GM12878 (cell line): ENCODE measurements at regions of chr2 and their contacts with region 1.

Region 1: GRCh38 chr2:60954139-60954538 is 63.4 kb upstream of the PEX13 start:
- DNase-seq: peak; percentile 40
- ATAC-seq: peak; percentile 94
- H3K4me3 ChIP-seq: no peak overlapping the region
- H3K27ac ChIP-seq: no peak overlapping the region
- H3K4me1 ChIP-seq: no peaks in the 10 kb centered on the region
- H3K27me3 ChIP-seq: no peaks in the 10 kb centered on the region
- CTCF ChIP-seq: no peak
- EP300 ChIP-seq: peak; percentile 45 to 79; a peak in 3 of 4 replicates
- POLR2A ChIP-seq: no peak
- RAD21 ChIP-seq: no peak

Region 2: DNA sequence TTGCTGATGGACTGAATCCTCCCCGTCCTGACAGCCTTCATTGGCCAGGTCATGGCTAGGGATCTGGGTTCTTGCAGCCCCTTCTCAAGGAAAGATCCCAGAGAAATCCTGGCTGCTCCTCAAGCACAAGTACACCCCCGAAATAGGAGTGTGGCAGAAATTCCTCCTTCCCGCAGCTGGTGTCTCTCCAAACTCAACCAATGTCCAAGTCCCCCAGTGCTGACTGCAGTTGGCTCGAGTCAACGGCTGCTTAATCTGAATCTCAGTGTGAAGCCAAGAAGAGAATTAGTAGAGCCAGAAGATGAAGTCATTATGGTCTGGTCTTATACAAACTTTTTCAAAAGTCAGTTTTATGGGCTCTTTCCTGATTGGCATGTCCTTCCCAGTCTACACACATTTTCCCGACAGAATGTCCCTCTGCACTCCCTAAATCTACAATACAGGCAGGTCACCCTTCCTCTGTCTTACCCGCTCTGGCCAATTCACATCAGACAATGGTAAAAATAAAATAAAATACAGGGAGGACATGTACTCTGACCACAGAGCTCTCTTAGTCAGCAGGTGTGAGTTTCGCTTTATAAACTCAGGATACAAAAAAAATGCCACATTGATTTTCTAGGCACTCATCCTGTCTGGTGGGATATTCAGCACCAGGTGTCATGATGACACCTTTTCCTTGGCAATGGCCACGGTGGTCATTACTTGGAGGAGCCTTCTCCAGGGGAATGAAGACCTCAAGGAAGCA is 274.9 kb before region 1 on chr2:
- CTCF ChIA-PET with region 1: no interaction called
- POLR2A ChIA-PET with region 1: no interaction called
- RAD21 ChIA-PET with region 1: no interaction called
- SMC1A ChIA-PET with region 1: no interaction called
- in situ Hi-C with region 1: no loop called
- intact Hi-C with region 1: no loop called
- DNase-seq: no peak
- ATAC-seq: 0 out of 3 replicates have a peak, but pooled peaks have one; percentile 11
- H3K4me3 ChIP-seq: no peak overlapping the region
- H3K27ac ChIP-seq: no peak overlapping the region
- H3K4me1 ChIP-seq: peaks cover 3% of the 10 kb centered on the region; the same call in 1 of the 2 replicates
- H3K27me3 ChIP-seq: no peaks in the 10 kb centered on the region
- CTCF ChIP-seq: no peak
- EP300 ChIP-seq: no peak
- POLR2A ChIP-seq: no peak
- RAD21 ChIP-seq: no peak

Region 3: DNA sequence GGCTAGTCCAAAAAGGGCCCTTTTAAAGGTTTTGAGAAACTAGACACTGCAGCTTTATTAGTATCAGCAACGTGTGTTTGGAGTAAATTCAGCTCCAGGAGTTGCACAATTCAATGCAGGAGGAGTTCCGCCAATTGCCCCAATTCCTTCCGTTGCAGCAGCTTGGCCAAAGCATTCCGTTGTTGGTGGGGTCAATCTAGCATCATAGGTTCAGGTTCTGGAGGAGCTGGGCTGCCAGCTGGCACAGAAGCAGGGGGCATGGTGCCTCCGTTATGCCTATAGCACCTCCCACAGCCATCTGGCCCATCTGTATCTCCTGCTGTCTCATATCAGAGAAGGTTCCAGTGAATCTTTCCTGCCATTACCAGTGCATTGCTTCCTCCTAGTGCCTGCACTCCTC is 17.4 kb before region 1 on chr2:
- CTCF ChIA-PET with region 1: interaction called, 4 read pairs
- POLR2A ChIA-PET with region 1: no interaction called
- RAD21 ChIA-PET with region 1: no interaction called
- SMC1A ChIA-PET with region 1: interaction called, 12 read pairs
- in situ Hi-C with region 1: no loop called
- intact Hi-C with region 1: no loop called
- DNase-seq: no peak
- ATAC-seq: no peak
- H3K4me3 ChIP-seq: no peak overlapping the region
- H3K27ac ChIP-seq: no peak overlapping the region
- H3K4me1 ChIP-seq: no peaks in the 10 kb centered on the region
- H3K27me3 ChIP-seq: no peaks in the 10 kb centered on the region
- CTCF ChIP-seq: no peak
- EP300 ChIP-seq: no peak
- POLR2A ChIP-seq: peak; percentile 6; the same call in 1 of the 2 replicates
- RAD21 ChIP-seq: no peak

Region 4: DNA sequence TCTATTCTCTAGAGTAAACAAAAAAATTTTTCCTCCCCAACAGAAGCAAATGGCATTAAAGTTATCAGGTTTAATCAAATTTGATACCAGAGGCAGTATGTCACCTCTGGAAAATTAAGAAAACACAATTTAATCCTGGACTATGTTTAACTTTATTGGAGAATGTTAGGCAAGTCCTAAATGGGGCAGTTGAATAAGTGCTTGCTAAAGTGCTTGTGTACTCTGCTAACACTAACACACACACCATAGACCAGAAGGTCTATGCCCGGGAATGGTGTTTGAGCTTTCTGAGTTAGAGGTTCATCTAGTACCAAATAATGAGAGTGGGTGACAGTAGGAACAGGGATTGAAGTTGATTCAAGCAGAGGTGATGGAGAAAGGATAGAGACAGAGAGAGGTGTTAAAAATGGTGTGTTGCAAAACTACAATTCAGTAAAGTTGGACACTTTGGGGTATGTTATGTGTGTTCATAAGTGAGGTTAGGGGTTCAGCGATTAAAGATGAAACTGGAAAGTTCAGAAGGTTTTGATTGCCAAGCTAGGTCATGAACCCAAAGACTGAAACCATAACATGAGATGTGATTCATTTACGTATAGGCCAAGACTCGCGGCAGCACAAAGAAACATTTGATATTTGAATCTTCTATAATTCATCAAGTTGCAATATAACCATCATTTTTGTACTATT is 22.9 kb after region 1 on chr2:
- CTCF ChIA-PET with region 1: interaction called, 6 read pairs
- POLR2A ChIA-PET with region 1: interaction called, 12 read pairs
- RAD21 ChIA-PET with region 1: interaction called, 10 read pairs
- SMC1A ChIA-PET with region 1: interaction called, 7 read pairs
- in situ Hi-C with region 1: no loop called
- intact Hi-C with region 1: no loop called
- DNase-seq: no peak
- ATAC-seq: peak; percentile 66
- H3K4me3 ChIP-seq: no peak overlapping the region; the same call in 1 of the 2 replicates
- H3K27ac ChIP-seq: no peak overlapping the region
- H3K4me1 ChIP-seq: peaks cover 56% of the 10 kb centered on the region
- H3K27me3 ChIP-seq: no peaks in the 10 kb centered on the region
- CTCF ChIP-seq: no peak
- EP300 ChIP-seq: 0 out of 4 replicates have a peak, but pooled peaks of 1 of the 2 experiments have one; percentile 6
- POLR2A ChIP-seq: no peak
- RAD21 ChIP-seq: no peak

Region 5: DNA sequence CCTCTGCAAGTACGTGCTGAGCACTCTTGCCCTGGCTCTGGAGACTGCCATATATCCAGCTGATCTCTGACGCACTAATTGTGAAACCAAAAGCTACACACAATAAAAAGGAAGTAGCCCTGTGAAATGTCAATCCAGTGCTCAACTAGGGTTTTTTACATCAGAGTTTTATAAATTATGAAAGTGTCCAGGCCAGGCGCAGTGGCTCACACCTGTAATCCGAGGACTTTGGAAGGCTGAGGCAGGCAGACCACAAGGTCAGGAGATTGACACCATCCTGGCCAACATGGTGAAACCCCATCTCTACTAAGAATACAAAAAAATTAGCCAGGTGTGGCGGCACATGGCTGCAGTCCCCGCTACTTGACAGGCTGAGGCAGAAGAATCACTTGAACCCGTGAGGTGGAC is 38.9 kb after region 1 on chr2:
- CTCF ChIA-PET with region 1: interaction called, 5 read pairs
- POLR2A ChIA-PET with region 1: interaction called, 4 read pairs
- RAD21 ChIA-PET with region 1: interaction called, 8 read pairs
- SMC1A ChIA-PET with region 1: interaction called, 34 read pairs
- in situ Hi-C with region 1: no loop called
- intact Hi-C with region 1: no loop called
- DNase-seq: peak; percentile 83
- ATAC-seq: peak; percentile 99
- H3K4me3 ChIP-seq: no peak overlapping the region
- H3K27ac ChIP-seq: peak overlapping the region; percentile 41
- H3K4me1 ChIP-seq: peaks cover 7% of the 10 kb centered on the region
- H3K27me3 ChIP-seq: no peaks in the 10 kb centered on the region
- CTCF ChIP-seq: no peak
- EP300 ChIP-seq: peak; percentile 82 to 93
- POLR2A ChIP-seq: no peak
- RAD21 ChIP-seq: no peak